Tibial artery (tissue), 4 donors: ENCODE measurements at regions of chr14 and their contacts with region 1.

Region 1: GRCh38 chr14:37490607-37491006 is 104.4 kb downstream of the FOXA1 start:
- DNase-seq: no peak
- H3K4me3 ChIP-seq: no peak overlapping the region
- H3K27ac ChIP-seq: no peak overlapping the region
- H3K4me1 ChIP-seq: no peaks in the 10 kb centered on the region
- H3K27me3 ChIP-seq: no peaks in the 10 kb centered on the region
- CTCF ChIP-seq: no peak

Region 2: DNA sequence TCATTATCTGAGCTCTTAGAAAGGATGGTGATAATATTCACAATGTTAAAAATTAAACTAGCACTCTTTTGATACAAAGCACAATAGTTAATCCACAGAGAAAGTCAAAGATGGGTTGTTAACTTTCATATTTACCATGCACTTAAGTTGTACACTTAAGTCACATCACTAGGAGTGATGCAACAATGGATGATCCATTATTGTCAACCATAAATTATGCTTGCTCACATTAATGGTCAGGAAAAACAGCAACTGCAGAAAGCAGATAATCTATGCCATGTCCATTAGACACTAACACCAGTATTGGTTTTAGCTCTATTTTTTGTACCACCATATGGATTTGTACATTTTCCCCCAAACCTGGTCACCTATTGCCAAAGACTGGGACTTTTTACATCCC is 91.1 kb before region 1 on chr14:
- intact Hi-C with region 1: no loop called
- DNase-seq: no peak
- H3K4me3 ChIP-seq: no peak overlapping the region
- H3K27ac ChIP-seq: no peak overlapping the region
- H3K4me1 ChIP-seq: no peaks in the 10 kb centered on the region
- H3K27me3 ChIP-seq: no peaks in the 10 kb centered on the region
- CTCF ChIP-seq: no peak

Region 3: DNA sequence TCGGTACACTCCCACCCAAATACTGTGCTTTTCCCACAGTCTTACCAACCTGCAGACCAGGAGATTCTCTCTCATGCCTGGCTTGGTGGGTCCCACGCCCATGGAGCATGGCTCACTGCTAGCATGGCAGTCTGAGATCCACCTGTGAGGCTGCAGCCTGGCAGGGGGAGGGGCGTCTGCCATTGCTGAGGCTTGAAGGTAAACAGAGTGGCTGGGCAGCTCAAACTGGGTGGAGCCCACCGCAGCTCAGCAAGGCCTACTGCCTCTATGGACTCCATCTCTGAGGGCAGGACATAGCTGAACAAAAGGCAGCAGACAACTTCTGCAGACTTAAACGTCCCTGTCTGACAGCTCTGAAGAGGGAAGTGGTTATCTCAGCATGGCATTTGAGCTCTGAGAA is 11.3 kb after region 1 on chr14:
- intact Hi-C with region 1: loop called (anchors 1 kb)
- DNase-seq: no peak
- H3K4me3 ChIP-seq: no peak overlapping the region
- H3K27ac ChIP-seq: no peak overlapping the region
- H3K4me1 ChIP-seq: no peaks in the 10 kb centered on the region
- H3K27me3 ChIP-seq: no peaks in the 10 kb centered on the region
- CTCF ChIP-seq: no peak